ENCODE measurements at regions of chr10 and their contacts with region 1.

Region 1: GRCh38 chr10:97210543-97210961 is 24.8 kb upstream of the SLIT1 start:
- DNase-seq: peak in 8 of 10 donors; percentile 44 to 93 (median 78)

Region 2: GRCh38 chr10:96840841-96841518 is 369.6 kb before region 1 on chr10:
- intact Hi-C with region 1: no loop called
- DNase-seq: no peak

Region 3: DNA sequence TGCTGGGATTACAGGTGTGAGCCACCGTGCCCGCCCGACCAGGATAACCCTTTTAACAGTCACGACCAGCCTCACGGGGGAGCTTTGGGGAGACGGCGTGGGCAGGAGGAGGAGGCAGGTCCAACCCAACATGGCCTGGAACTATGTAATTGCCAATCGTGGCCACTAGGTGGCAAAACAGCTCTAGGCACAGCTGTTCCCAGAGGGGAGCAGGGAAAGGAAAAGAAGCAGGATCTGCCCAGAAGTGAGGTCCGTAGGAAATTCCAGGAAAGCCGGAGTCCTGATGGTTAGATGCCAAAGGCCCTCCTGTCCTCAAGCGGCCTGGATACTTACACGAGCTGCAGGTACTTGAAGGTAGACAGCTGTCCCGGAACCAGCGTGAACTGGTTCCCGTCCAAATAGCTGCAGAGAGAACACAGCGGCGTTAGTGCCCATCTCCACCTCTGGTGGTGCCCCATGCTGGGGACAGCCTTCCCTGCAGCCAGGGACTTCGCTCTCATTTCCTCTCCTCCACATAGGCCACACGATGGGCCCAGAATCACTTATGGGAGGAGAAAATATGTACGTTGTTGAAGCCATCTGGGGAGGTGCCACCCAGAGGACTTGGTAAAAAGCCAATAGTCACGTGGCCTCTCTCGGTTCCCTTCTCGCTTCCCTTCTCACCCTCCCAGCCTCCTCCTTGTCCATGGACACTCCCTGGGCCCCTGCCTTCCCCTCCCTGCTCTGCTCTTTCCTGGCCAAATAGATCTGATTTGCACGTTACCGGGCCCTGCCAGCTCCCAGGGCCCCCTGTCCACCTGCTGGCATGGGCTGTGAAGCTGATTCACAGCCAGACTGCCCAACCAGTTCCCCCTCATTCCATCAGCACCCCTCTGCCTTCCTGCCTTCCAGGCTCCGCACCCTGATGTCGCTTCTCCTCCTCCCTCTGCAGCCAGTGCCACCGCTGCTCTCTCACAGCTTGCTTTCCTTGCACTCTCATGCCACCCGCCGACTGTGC is 172.9 kb before region 1 on chr10:
- intact Hi-C with region 1: loop called (anchors 1 kb)
- DNase-seq: peak; percentile 63 to 96 (median 84)

Region 4: GRCh38 chr10:97072851-97073665 is 137.5 kb before region 1 on chr10:
- intact Hi-C with region 1: loop called (anchors 1 kb)
- DNase-seq: peak; percentile 73 to 98 (median 94)

Measured in posterior cingulate gyrus (tissue), 11 donors.